ENCODE measurements at regions of chr16 and their contacts with region 1.

Region 1: DNA sequence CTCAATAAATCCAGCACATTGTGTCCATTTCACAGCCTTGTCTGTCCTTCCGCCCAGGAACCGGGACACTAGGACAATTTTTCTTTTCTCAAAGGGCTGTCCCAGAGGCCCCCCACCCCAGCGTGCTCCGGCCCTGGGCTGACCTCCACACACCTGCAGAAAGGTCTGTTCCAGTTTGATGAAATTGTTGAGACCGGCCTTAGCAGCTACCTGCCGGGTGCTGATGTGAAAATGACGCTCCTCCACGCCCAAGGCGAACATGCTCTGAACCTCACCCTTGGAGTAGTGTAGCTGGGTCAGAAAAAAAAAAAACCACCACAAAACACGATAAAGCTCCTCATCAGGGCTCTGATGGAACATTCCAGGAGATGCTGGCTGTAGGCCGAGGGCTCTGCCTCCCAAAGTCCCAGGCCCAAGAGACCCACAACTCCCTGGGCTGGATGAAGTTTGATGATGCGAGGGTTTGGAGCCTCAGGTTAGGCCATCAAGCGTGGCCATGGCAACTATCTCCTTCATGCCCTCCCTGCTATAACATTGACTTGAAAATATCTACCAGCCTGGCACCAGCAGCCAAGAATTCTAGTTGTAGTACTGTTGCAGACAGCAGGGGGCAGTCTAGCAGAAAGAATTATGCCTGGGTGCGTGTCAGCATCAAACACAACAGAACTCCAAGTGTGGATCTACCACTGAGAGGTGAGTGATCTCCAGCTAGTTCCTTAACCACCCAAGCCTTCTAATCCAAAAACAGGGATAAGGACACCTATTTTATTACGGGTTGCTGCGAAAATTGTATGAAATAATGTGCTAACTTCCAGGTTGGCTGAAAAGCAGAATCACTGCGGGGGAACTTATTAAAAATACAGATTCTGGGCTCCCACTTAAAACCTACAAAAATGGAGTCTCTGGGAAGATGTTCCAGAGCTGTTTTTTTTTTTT is 62.1 kb downstream of the RMI2 start:
- ATAC-seq: peak in 4 of 8 experiments; percentile 30 to 85 (median 78)
- H3K4me3 ChIP-seq: no peak overlapping the region
- H3K27ac ChIP-seq: no peak overlapping the region
- H3K4me1 ChIP-seq: peaks cover 0 to 4% of the 10 kb centered on the region in 2 donors

Region 2: GRCh38 chr16:11084484-11084875 is 322.8 kb before region 1 on chr16:
- in situ Hi-C with region 1: no loop called
- ATAC-seq: peak in 7 of 8 experiments; percentile 9 to 92 (median 85)
- H3K4me3 ChIP-seq: no peak overlapping the region
- H3K27ac ChIP-seq: peak overlapping the region; percentile 65 to 66
- H3K4me1 ChIP-seq: peaks cover 33 to 55% of the 10 kb centered on the region in 2 donors

Region 3: GRCh38 chr16:11201498-11202259 is 205.6 kb before region 1 on chr16:
- in situ Hi-C with region 1: no loop called
- ATAC-seq: peak; percentile 41 to 89 (median 82)
- H3K4me3 ChIP-seq: no peak overlapping the region
- H3K27ac ChIP-seq: no peak overlapping the region
- H3K4me1 ChIP-seq: peaks cover 19 to 20% of the 10 kb centered on the region in 2 donors

Region 4: GRCh38 chr16:11597239-11598101 is 190.2 kb after region 1 on chr16:
- in situ Hi-C with region 1: no loop called
- ATAC-seq: peak in 7 of 8 experiments; percentile 74 to 91 (median 80)
- H3K4me3 ChIP-seq: no peak overlapping the region
- H3K27ac ChIP-seq: no peak overlapping the region
- H3K4me1 ChIP-seq: peaks cover 0 to 12% of the 10 kb centered on the region in 2 donors

Region 5: DNA sequence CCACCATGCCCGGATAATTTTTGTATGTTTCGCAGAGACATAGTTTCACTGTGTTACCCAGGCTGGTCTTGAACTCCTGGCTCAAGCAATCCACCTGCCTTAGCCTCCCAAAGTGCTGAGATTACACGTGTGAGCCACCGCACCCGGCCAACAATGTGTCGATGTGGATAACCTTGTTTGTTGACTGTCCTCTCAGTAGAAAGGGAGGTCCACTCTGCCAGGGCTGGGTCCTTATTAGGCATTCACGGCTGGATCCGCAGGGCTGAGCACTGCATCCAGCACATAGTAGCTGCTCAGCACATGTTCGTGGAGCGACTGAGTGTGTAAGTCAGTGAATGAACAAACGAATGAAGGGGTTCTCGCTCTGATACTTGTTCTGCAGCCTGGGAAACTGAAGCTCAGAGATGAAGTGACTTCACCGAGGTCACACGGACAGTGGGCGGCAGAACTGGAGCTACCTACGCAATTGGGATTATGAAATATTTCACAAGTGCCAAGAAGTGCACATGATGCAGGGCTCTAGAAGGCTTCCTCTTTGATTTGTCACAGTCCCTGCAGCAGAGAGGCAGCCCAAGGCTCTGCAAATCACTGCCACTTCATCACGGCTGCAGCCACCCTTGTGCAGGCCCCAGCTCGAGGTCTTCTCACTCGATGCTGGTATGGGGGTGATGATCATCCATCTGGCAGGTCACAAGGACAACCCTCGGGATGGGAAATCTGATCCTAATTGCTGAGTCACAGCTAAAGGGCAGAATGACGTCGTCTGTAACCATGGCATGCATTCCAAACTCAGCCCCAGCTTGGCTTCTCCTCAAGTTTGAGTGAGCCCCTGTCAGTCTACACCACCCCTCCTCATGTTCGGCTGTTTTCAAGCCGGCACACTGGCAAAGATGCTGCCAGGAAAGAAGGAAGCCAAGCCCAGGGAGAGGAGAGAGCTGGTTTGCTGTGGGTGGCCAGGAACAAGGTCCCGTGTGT is 232.9 kb after region 1 on chr16:
- in situ Hi-C with region 1: loop called in 1 of 9 experiments (anchors 25 kb)
- ATAC-seq: peak; percentile 80 to 97 (median 94)
- H3K4me3 ChIP-seq: no peak overlapping the region
- H3K27ac ChIP-seq: peak overlapping the region in 1 of 2 donors; percentile 41
- H3K4me1 ChIP-seq: peaks cover 4 to 7% of the 10 kb centered on the region in 2 donors

Region 6: DNA sequence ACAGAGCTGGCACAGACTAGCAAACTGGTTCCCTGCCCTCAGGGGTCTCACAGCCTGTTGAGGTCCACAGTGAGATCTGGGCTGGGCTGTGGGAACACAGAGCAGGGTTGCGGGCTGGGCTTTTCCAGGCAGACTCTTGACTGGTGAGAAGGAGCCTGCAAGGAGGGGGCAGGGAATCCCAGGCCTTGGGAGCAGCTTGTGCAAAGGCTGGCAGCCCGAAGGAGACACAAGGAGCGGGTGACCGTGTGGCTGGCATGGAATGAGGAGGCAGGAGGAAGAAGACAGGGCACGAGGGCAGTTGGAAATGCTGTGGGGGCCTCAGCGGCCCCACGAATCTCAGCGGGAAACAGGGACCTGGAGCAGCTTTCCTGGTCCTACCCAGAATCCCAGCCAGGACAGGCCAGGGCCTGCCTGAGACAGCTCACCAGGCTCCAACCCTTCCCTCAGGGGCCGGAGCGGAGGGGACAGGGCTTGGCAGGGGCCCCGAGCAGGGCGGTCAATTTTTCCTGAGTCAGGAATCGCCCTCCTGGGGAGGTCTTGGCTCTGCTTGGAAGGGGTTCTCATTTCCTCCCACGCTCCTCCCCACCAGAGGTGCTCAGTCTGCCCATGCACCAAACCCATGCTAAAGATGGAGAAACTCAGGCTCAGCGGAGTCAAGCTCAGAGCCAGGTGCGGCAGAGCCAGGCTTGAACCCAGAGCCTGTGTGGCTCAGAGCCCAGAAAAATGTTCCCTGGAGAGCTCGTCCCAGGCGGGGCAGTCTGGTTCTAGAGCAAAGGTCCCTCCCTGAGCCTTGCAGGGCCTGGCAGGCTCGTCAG is 251.8 kb after region 1 on chr16:
- in situ Hi-C with region 1: loop called in 1 of 9 experiments (anchors 10 kb)
- ATAC-seq: peak in 3 of 8 experiments; percentile 37 to 85 (median 73)
- H3K4me3 ChIP-seq: no peak overlapping the region
- H3K27ac ChIP-seq: no peak overlapping the region
- H3K4me1 ChIP-seq: no peaks in the 10 kb centered on the region

Region 7: GRCh38 chr16:11706180-11706742 is 298.9 kb after region 1 on chr16:
- in situ Hi-C with region 1: loop called in 1 of 9 experiments (anchors 25 kb)
- ATAC-seq: peak in 3 of 8 experiments; percentile 25 to 70 (median 29)
- H3K4me3 ChIP-seq: no peak overlapping the region
- H3K27ac ChIP-seq: no peak overlapping the region
- H3K4me1 ChIP-seq: no peaks in the 10 kb centered on the region

Region 8: DNA sequence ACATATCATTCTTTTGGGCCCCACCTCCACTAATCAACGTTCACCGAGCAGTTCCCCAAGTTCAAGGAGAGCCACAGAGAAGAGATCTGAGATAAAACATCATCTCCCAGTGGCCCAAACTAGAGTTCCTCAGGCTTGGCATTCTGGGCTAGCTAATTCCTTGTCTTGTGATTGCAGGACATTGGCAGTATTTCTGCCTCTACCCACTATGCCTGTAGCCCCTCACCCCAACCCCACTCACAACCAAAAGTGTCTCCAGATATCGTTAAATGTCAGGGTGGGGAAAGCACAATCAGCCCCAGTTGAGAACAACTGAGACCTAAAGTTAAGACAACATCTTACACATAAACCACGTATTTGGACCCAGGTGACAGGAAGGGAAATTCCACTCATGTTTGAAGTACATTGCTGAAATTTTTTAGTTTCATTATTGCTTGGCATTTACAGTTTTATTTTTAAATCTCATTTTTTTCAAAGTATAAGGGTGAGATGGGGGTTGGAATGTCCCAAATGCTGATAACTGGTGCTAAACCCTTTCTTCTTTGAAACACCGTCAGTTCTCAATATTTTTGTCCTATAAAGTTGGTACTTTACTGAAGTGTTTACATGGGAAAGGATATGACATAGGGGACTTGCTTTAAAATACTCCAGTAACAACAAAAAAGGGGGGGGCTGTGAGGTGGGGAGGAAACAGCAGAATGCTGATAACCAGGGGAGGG is 376.2 kb after region 1 on chr16:
- in situ Hi-C with region 1: no loop called
- ATAC-seq: peak in 3 of 8 experiments; percentile 25 to 43 (median 40)
- H3K4me3 ChIP-seq: no peak overlapping the region
- H3K27ac ChIP-seq: no peak overlapping the region
- H3K4me1 ChIP-seq: peaks cover 0 to 7% of the 10 kb centered on the region in 2 donors

Region 9: DNA sequence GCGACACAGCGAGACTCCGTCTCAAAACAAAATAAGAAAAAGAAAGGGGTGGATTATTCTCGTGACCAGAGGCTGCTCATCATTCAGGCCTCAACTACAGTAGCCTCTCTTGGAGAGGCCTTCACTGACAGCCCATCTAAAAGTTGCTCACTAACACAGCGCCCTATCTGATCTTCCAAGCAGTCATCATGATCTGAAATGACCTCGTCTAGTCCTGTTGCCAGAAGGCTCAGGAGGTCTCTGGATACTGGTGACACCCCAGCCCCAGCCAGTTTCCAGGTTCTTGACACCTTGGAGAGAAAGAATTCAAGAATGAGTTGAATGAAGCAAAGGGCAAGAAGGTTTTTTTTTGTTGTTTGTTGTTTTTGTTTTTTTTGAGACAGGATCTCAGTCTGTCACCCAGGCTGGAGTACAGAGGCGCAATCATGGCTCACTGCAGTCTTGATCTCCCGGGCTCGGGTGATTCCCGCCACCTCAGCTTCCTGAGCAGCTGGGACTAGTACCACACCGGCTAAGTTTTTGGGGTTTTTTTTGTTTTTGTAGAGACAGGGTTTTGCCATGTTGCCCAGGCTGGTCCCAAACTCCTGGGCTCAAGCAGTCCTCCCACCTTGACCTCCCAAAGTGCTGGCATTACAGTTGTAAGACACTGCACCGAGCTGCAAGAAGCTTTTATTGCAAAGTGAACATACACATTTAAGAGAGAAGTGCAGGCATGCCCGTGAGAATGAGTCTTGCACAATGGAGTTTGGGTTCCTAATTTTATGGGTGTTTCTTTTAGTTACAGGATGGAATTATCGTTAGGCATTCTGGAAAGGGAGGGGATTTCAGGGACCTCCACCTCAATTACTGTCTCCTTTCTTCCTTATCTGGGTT is 392.4 kb after region 1 on chr16:
- in situ Hi-C with region 1: loop called in 1 of 9 experiments (anchors 25 kb)
- ATAC-seq: no peak
- H3K4me3 ChIP-seq: no peak overlapping the region
- H3K27ac ChIP-seq: no peak overlapping the region
- H3K4me1 ChIP-seq: peaks cover 19 to 20% of the 10 kb centered on the region in 2 donors

Region 10: GRCh38 chr16:12067714-12068401 is 660.5 kb after region 1 on chr16:
- in situ Hi-C with region 1: loop called in 1 of 9 experiments (anchors 25 kb)
- ATAC-seq: peak; percentile 65 to 94 (median 76)
- H3K4me3 ChIP-seq: no peak overlapping the region
- H3K27ac ChIP-seq: no peak overlapping the region
- H3K4me1 ChIP-seq: no peaks in the 10 kb centered on the region

Measured in motor neuron (in vitro differentiated cells).